ENCODE measurements at regions of chr5 and their contacts with region 1.

Region 1: GRCh38 chr5:159905496-159905895 is 10.8 kb upstream of the ADRA1B start:
- DNase-seq: peak; percentile 100

Region 2: GRCh38 chr5:159581502-159582249 is 323.8 kb before region 1 on chr5:
- in situ Hi-C with region 1: loop called (anchors 10 kb)
- DNase-seq: peak; percentile 100

Region 3: DNA sequence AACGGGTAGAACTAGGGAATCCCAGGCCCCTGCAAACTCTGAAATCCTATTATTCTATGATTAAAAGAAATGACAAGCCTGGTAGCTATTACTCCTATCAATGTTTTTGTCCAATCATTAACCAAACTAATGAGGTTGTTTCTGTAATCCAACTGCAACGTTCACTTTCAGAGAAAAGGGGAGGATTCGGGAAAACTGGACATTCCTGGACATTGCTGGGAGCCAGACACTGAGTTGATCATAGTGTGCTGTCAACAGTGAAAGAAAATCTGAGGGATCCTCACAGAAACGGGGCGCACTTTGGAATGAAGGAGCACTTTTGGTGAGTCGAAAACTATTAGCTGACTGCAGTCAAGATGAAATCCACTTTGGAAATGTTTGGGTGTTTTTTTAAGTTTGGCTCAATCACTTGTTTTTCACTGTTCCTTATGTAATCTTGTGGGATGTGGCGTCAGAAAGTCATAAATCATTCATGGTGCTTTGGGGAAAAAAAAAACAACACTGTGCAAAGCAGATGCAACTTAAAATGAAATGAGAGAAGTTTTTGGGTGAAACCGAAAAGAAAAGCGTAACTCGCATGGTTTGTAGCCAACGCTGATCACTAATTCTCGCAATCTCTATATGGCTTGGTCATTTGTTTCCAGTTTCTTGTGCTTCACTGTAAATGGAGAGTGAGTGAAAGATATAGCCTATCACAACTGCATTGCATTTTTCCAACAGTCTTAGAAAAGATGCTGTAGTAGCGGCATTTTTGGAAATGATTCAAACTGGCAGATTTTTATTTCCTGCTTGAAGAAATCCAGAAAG is 40.4 kb before region 1 on chr5:
- in situ Hi-C with region 1: no loop called
- DNase-seq: peak; percentile 36